ENCODE measurements at regions of chr10 and their contacts with region 1.

Region 1: DNA sequence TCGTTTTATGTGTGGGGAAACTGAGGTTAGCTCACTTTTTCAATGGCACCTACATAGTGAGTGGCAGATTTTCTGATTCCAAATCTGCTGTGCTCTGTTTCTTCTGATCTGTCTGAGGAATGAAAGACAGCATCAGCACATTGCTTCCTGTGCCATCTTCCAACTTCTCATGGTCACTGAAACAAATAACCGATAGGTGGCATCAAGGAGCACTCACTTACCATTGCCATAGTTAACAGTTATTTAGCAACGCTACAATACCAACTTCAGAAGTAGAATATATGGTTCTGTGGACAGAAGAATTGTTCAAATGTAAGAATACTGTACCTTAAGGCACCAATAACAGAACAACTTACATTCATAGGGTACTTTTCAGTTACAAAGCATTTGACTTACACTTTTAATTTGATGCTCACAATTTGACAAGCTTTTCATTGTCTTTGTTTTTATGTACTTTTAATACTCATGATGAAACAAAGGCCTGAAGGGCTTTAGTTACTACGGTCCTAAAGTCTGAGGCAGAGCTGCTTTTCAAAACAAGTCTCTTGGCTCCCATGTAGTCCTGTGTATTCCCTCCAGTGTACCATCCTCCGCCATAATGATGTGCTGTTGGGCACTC is 228.9 kb upstream of the TCF7L2 start:
- DNase-seq: peak; percentile 35
- ATAC-seq: no peak
- H3K4me3 Mint-ChIP-seq: no peak overlapping the region
- H3K27ac Mint-ChIP-seq: no peak overlapping the region
- H3K4me1 Mint-ChIP-seq: no peaks in the 10 kb centered on the region
- H3K27me3 Mint-ChIP-seq: no peaks in the 10 kb centered on the region

Region 2: GRCh38 chr10:113385021-113385999 is 664.1 kb after region 1 on chr10:
- CTCF ChIA-PET with region 1: interaction called, 19 read pairs
- POLR2A ChIA-PET with region 1: no interaction called
- DNase-seq: peak; percentile 77
- ATAC-seq: peak; percentile 95
- H3K4me3 Mint-ChIP-seq: no peak overlapping the region
- H3K27ac Mint-ChIP-seq: no peak overlapping the region
- H3K4me1 Mint-ChIP-seq: peaks cover 28% of the 10 kb centered on the region
- H3K27me3 Mint-ChIP-seq: peaks cover 20% of the 10 kb centered on the region